ENCODE measurements at regions of chr9 and their contacts with region 1.

Region 1: GRCh38 chr9:99184475-99185347 is 37.0 kb downstream of the ALG2 start:
- DNase-seq: peak; percentile 83
- H3K4me3 ChIP-seq: no peak overlapping the region
- H3K27ac ChIP-seq: no peak overlapping the region
- H3K4me1 ChIP-seq: peaks cover 26% of the 10 kb centered on the region
- CTCF ChIP-seq: peak; percentile 92

Region 2: DNA sequence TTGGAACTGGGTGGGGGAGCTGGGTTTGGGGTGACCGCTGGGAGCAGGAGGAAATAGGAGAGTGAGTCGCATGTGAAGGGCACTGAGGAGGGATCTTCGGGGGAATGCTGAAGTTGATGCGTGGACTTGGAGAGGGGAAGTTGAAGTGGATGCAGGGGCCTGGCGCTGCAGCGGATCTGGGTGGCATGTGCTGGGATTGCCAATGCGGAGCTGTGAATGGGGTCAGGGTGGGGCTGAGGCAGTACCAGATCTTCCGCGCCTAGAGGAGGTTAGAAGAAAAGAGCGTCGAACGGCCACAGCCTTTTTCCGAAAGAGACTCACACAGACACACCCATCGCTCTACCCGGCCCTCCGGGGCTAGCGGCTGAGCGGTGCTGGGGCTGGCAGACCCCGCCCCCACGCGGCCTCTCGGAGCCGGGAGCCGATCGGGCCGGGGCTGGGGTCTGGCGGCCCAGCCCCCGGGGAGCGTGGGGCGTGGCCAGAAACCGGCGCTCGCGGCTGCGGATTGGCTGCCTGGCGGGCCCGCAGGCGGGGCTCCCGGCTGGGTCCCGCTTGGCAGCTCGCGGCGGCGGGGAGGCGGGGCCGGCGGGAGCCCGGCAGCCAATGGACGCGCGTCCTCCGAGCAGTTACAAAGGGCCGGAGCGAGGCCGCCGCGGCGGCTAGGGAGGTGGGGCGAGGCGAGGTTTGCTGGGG is 80.1 kb before region 1 on chr9 and contains the start of gene TGFBR1:
- CTCF ChIA-PET with region 1: no interaction called
- POLR2A ChIA-PET with region 1: no interaction called
- intact Hi-C with region 1: no loop called
- DNase-seq: peak; percentile 95
- H3K4me3 ChIP-seq: peak within 1 kb of the TSS; percentile 78
- H3K27ac ChIP-seq: peak within 1 kb of the TSS; percentile 31
- H3K4me1 ChIP-seq: peaks cover 46% of the 10 kb centered on the region
- CTCF ChIP-seq: no peak
- total RNA-seq, gene TGFBR1: 13.6 and 14.3 TPM in 2 replicates

Region 3: GRCh38 chr9:99116003-99116411 is 68.7 kb before region 1 on chr9:
- CTCF ChIA-PET with region 1: no interaction called
- POLR2A ChIA-PET with region 1: no interaction called
- intact Hi-C with region 1: no loop called
- DNase-seq: no peak
- H3K4me3 ChIP-seq: no peak overlapping the region
- H3K27ac ChIP-seq: no peak overlapping the region
- H3K4me1 ChIP-seq: peaks cover 95% of the 10 kb centered on the region
- CTCF ChIP-seq: no peak

Region 4: GRCh38 chr9:99162759-99163364 is 21.8 kb before region 1 on chr9:
- CTCF ChIA-PET with region 1: no interaction called
- POLR2A ChIA-PET with region 1: no interaction called
- intact Hi-C with region 1: no loop called
- DNase-seq: peak; percentile 56
- H3K4me3 ChIP-seq: no peak overlapping the region
- H3K27ac ChIP-seq: no peak overlapping the region
- H3K4me1 ChIP-seq: no peaks in the 10 kb centered on the region
- CTCF ChIP-seq: peak; percentile 96

Region 5: DNA sequence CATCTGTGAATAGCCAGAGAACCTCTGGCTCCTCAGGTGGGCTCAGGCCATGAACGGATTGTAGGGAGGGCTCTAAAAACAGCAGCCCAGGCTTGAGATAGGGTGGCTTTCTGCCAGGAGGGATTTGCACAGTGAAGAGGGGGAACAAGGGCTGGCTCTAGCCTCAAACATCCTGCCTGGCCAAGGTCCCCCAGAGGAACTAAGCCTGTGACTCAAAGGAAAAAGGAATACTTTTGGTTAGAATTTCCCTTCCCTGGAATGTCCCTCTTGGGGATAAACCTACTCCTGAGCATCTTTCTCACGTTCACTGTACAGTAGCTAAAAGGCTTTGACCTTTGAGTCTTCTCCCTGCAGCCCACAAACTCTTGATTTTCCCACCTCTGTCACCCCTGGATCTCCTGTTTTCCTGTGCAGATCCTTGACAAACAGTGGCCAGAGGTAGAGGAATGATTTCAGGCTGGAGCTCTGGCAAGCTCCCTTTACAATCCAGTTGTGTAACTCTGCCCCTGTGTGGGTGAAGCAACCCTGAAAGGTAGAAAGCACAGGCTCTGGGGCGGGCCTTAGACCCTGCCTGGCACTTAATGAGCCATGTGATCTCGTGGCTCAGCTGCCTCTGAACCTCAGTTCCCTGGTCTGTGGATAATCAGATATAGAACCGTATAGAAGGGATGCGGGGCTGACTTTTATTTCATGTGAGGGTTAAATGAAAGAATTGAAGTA is 54.8 kb after region 1 on chr9:
- CTCF ChIA-PET with region 1: interaction called, 4 read pairs
- POLR2A ChIA-PET with region 1: no interaction called
- intact Hi-C with region 1: loop called (anchors 2 kb)
- DNase-seq: no peak
- H3K4me3 ChIP-seq: no peak overlapping the region
- H3K27ac ChIP-seq: peak overlapping the region; percentile 11
- H3K4me1 ChIP-seq: peaks cover 76% of the 10 kb centered on the region
- CTCF ChIP-seq: no peak

Region 6: DNA sequence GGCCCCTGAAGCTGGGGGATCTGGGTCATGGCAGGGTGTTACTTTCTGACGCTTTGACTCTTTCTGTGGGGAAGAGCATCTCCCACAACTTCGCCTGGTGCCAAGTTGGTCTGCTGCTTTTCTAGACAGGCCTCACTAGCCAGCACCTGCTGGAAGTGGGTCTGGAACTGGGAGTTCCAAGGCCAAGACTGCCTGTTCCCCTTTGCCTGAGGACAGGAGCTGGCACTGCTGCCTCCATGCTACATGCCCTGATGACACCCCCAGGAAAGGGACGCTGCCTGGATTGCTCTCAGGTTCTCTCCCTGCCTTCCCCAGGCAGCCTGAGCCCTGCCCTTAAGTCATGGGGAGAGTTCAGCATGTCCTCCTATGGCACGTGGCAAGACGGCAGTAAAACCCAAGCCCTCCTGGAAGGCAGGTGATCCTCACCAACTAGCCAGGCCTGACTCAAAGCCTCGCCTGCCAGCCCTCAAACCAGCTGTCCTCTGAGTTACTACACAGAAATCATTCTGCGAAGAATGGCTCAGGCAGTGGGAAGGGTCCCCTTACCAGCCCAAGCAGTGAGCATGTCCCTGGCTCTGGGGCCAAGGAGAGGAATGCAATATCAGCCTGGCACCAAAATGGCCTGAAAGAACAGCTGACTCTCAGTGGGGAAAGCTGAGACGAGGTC is 73.1 kb after region 1 on chr9:
- CTCF ChIA-PET with region 1: no interaction called
- POLR2A ChIA-PET with region 1: no interaction called
- intact Hi-C with region 1: no loop called
- DNase-seq: no peak
- H3K4me3 ChIP-seq: no peak overlapping the region
- H3K27ac ChIP-seq: no peak overlapping the region
- H3K4me1 ChIP-seq: peaks cover 35% of the 10 kb centered on the region
- CTCF ChIP-seq: no peak

Region 7: GRCh38 chr9:99336005-99336404 is 151.3 kb after region 1 on chr9:
- CTCF ChIA-PET with region 1: no interaction called
- POLR2A ChIA-PET with region 1: no interaction called
- intact Hi-C with region 1: loop called (anchors 10 kb)
- DNase-seq: no peak
- H3K4me3 ChIP-seq: no peak overlapping the region
- H3K27ac ChIP-seq: no peak overlapping the region
- H3K4me1 ChIP-seq: no peaks in the 10 kb centered on the region
- CTCF ChIP-seq: no peak

Region 8: GRCh38 chr9:99819856-99820684 is 635.4 kb after region 1 on chr9:
- CTCF ChIA-PET with region 1: no interaction called
- POLR2A ChIA-PET with region 1: no interaction called
- intact Hi-C with region 1: loop called (anchors 10 kb)
- DNase-seq: peak; percentile 95
- H3K4me3 ChIP-seq: peak overlapping the region; percentile 73
- H3K27ac ChIP-seq: peak overlapping the region; percentile 80
- H3K4me1 ChIP-seq: peaks cover 36% of the 10 kb centered on the region
- CTCF ChIP-seq: peak; percentile 45

Region 9: DNA sequence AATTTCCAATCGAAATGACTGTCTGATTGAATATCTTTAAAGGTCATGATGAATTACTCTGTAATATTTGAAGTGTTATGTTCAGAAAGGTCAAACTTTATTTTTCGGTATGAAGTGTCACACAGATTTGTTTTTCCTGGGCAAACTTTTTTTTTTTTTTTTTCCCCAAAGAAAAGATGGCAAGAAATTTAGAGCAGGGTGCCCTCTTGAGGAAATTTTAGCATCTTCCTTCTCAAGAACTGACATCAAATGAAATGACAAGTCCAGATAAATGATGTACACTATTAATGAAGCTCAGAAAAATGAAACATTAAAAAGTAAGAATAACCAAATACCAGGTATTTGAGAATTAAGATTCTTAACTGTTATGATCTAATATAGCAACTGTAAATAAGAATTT is 1038.0 kb after region 1 on chr9:
- CTCF ChIA-PET with region 1: no interaction called
- POLR2A ChIA-PET with region 1: no interaction called
- intact Hi-C with region 1: loop called (anchors 10 kb)
- DNase-seq: peak; percentile 58
- H3K4me3 ChIP-seq: no peak overlapping the region
- H3K27ac ChIP-seq: no peak overlapping the region
- H3K4me1 ChIP-seq: peaks cover 10% of the 10 kb centered on the region
- CTCF ChIP-seq: peak; percentile 83

Region 10: GRCh38 chr9:100598641-100599145 is 1414.0 kb after region 1 on chr9:
- CTCF ChIA-PET with region 1: no interaction called
- POLR2A ChIA-PET with region 1: no interaction called
- intact Hi-C with region 1: loop called (anchors 10 kb)
- DNase-seq: peak; percentile 74
- H3K4me3 ChIP-seq: peak overlapping the region; percentile 60
- H3K27ac ChIP-seq: no peak overlapping the region
- H3K4me1 ChIP-seq: peaks cover 13% of the 10 kb centered on the region
- CTCF ChIP-seq: no peak